RWPE1 (cell line): ENCODE measurements at regions of chr16 and their contacts with region 1.

Region 1: GRCh38 chr16:85092309-85092708 is 20.0 kb downstream of the CIBAR2 start:
- DNase-seq: no peak
- H3K27ac ChIP-seq: no peak overlapping the region
- CTCF ChIP-seq: no peak

Region 2: DNA sequence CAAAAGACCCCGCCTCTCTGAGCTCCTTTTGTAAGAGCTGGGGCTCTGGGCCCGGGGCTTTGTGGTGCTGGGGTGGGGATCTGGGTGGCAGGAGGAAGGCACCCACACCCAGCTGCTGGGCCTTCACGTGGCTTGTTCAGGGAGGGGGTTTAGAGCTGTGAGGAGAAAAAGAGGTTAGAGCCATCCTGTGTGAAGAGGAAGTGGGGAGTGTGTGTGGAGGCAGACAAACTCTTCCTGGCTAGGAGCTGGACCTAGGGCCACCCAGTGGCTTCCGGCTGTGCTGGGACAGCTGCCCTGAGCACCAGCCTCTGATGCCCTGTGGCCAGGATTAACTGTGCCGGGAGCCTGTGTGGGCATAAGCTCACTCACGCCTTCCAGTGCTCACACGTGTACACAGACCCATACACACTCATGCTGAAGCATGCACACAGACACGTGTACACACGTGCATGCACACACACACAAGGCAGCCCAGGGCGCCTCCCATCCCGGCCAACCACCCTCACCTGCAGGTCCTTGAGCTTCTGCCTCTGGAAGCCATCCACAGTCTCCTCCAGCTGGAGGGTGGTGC is 12.6 kb after region 1 on chr16:
- CTCF ChIA-PET with region 1: no interaction called
- POLR2A ChIA-PET with region 1: no interaction called
- DNase-seq: no peak
- H3K27ac ChIP-seq: peak overlapping the region; percentile 48
- CTCF ChIP-seq: no peak

Region 3: GRCh38 chr16:85416228-85417119 is 324.2 kb after region 1 on chr16:
- CTCF ChIA-PET with region 1: no interaction called
- POLR2A ChIA-PET with region 1: interaction called, 14 read pairs
- DNase-seq: peak; percentile 59
- H3K27ac ChIP-seq: peak overlapping the region; percentile 27
- CTCF ChIP-seq: peak; percentile 53